Breast epithelium (tissue), 4 donors: ENCODE measurements at regions of chr16 and their contacts with region 1.

Region 1: GRCh38 chr16:10240870-10241613 is 58.8 kb upstream of the GRIN2A start:
- DNase-seq: no peak
- H3K4me3 ChIP-seq: no peak overlapping the region
- H3K27ac ChIP-seq: no peak overlapping the region
- H3K4me1 ChIP-seq: no peaks in the 10 kb centered on the region
- H3K27me3 ChIP-seq: peaks cover 0 to 24% of the 10 kb centered on the region in 2 donors
- CTCF ChIP-seq: no peak
- POLR2A ChIP-seq: no peak

Region 2: DNA sequence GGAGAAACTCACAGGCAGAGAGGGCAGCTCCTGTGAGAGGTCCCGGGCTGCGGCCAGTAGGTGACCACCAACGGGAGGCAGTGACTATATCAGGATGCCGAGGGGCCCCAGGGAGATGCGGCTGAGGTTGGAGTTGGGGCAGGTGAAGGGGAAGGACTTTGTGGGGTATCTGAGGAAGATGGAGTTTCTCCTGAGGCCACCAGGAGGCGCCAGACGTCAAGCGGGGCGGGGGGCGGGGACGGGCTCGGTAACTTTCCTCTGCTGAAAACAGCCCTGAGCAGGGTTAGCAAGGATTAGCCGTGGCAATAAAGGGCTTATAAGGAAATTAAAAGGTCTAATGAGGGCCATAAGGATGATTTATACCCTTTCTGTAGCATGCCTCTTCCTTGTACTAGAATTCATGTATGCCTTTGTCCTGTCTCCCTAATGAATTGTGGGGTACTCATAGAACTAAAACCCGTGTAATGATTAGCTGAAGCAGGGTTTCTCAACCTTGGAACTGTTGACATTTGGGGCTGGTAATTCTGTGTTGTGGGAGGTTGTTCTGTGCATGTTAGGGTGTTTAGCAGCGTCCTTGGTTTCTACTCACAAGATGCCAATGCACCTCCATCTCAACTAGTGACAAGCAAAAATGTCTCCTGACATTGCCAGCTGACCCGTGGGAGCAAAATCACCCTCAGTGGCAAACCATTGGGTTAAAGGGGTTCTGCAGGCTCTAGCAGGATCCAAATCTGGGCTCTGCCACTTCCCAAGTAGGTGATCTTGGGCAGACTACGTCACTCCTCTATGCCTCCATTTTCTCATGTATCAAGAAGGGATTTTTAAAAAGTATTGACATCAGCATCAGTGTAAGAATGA is 16.0 kb after region 1 on chr16:
- intact Hi-C with region 1: loop called (anchors 1 kb)
- DNase-seq: peak in 1 of 2 donors; percentile 55
- H3K4me3 ChIP-seq: no peak overlapping the region
- H3K27ac ChIP-seq: no peak overlapping the region
- H3K4me1 ChIP-seq: no peaks in the 10 kb centered on the region
- H3K27me3 ChIP-seq: peaks cover 0 to 14% of the 10 kb centered on the region in 2 donors
- CTCF ChIP-seq: peak; percentile 40 to 72 (median 62)
- POLR2A ChIP-seq: no peak

Region 3: GRCh38 chr16:11188801-11189740 is 948.0 kb after region 1 on chr16:
- intact Hi-C with region 1: loop called (anchors 5 kb)
- DNase-seq: peak; percentile 48 to 60
- H3K4me3 ChIP-seq: peak overlapping the region in 2 of 3 donors; percentile 27 to 51
- H3K27ac ChIP-seq: no peak overlapping the region
- H3K4me1 ChIP-seq: no peaks in the 10 kb centered on the region
- H3K27me3 ChIP-seq: no peaks in the 10 kb centered on the region
- CTCF ChIP-seq: no peak
- POLR2A ChIP-seq: no peak